Natural killer cell (primary cell): ENCODE measurements at regions of chr18 and their contacts with region 1.

Region 1: GRCh38 chr18:3062798-3063680 is 50.1 kb upstream of the LPIN2 start:
- DNase-seq: peak; percentile 37 to 82
- ATAC-seq: no peak
- H3K4me3 ChIP-seq: no peak overlapping the region
- H3K4me3 Mint-ChIP-seq: peak overlapping the region; percentile 60
- H3K27ac ChIP-seq: peak overlapping the region; percentile 90
- H3K27ac Mint-ChIP-seq: peak overlapping the region; percentile 87 to 99
- H3K4me1 ChIP-seq: peaks cover 70% of the 10 kb centered on the region
- H3K4me1 Mint-ChIP-seq: peaks cover 68 to 75% of the 10 kb centered on the region in 2 donors
- H3K27me3 ChIP-seq: no peaks in the 10 kb centered on the region
- H3K27me3 Mint-ChIP-seq: no peaks in the 10 kb centered on the region
- CTCF ChIP-seq: peak; percentile 66

Region 2: GRCh38 chr18:2723207-2723606 is 339.8 kb before region 1 on chr18:
- intact Hi-C with region 1: no loop called
- DNase-seq: no peak
- ATAC-seq: no peak
- H3K4me3 ChIP-seq: no peak overlapping the region
- H3K4me3 Mint-ChIP-seq: no peak overlapping the region
- H3K27ac ChIP-seq: no peak overlapping the region
- H3K27ac Mint-ChIP-seq: peak overlapping the region; percentile 4 to 51
- H3K4me1 ChIP-seq: no peaks in the 10 kb centered on the region
- H3K4me1 Mint-ChIP-seq: peaks cover 10 to 28% of the 10 kb centered on the region in 2 donors
- H3K27me3 ChIP-seq: no peaks in the 10 kb centered on the region
- H3K27me3 Mint-ChIP-seq: no peaks in the 10 kb centered on the region
- CTCF ChIP-seq: no peak

Region 3: GRCh38 chr18:2932247-2933181 is 130.5 kb before region 1 on chr18:
- intact Hi-C with region 1: loop called (anchors 10 kb)
- DNase-seq: peak in 1 of 2 donors; percentile 86
- ATAC-seq: peak; percentile 68 to 79 (median 69)
- H3K4me3 ChIP-seq: no peak overlapping the region
- H3K4me3 Mint-ChIP-seq: no peak overlapping the region
- H3K27ac ChIP-seq: no peak overlapping the region
- H3K27ac Mint-ChIP-seq: peak overlapping the region; percentile 76 to 77
- H3K4me1 ChIP-seq: peaks cover 5% of the 10 kb centered on the region
- H3K4me1 Mint-ChIP-seq: peaks cover 17 to 19% of the 10 kb centered on the region in 2 donors
- H3K27me3 ChIP-seq: no peaks in the 10 kb centered on the region
- H3K27me3 Mint-ChIP-seq: no peaks in the 10 kb centered on the region
- CTCF ChIP-seq: peak; percentile 84

Region 4: GRCh38 chr18:2994603-2995432 is 68.2 kb before region 1 on chr18:
- intact Hi-C with region 1: loop called (anchors 2 kb)
- DNase-seq: peak; percentile 61 to 88
- ATAC-seq: peak; percentile 93 to 97 (median 96)
- H3K4me3 ChIP-seq: no peak overlapping the region
- H3K4me3 Mint-ChIP-seq: no peak overlapping the region
- H3K27ac ChIP-seq: no peak overlapping the region
- H3K27ac Mint-ChIP-seq: peak overlapping the region; percentile 35 to 63
- H3K4me1 ChIP-seq: peaks cover 28% of the 10 kb centered on the region
- H3K4me1 Mint-ChIP-seq: peaks cover 41 to 56% of the 10 kb centered on the region in 2 donors
- H3K27me3 ChIP-seq: no peaks in the 10 kb centered on the region
- H3K27me3 Mint-ChIP-seq: no peaks in the 10 kb centered on the region
- CTCF ChIP-seq: peak; percentile 74

Region 5: GRCh38 chr18:3012964-3013804 is 49.9 kb before region 1 on chr18 and contains the start of gene LPIN2:
- intact Hi-C with region 1: loop called (anchors 1 kb)
- DNase-seq: peak; percentile 92 to 97
- ATAC-seq: peak; percentile 87 to 94 (median 89)
- H3K4me3 ChIP-seq: peak within 1 kb of the TSS; percentile 45
- H3K4me3 Mint-ChIP-seq: peak within 1 kb of the TSS; percentile 95
- H3K27ac ChIP-seq: peak within 1 kb of the TSS; percentile 83
- H3K27ac Mint-ChIP-seq: peak within 1 kb of the TSS; percentile 88
- H3K4me1 ChIP-seq: peaks cover 38% of the 10 kb centered on the region
- H3K4me1 Mint-ChIP-seq: peaks cover 33 to 39% of the 10 kb centered on the region in 2 donors
- H3K27me3 ChIP-seq: no peaks in the 10 kb centered on the region
- H3K27me3 Mint-ChIP-seq: no peaks in the 10 kb centered on the region
- CTCF ChIP-seq: no peak
- total RNA-seq, gene LPIN2: 32.9 to 58.8 (median 57.1) TPM

Region 6: DNA sequence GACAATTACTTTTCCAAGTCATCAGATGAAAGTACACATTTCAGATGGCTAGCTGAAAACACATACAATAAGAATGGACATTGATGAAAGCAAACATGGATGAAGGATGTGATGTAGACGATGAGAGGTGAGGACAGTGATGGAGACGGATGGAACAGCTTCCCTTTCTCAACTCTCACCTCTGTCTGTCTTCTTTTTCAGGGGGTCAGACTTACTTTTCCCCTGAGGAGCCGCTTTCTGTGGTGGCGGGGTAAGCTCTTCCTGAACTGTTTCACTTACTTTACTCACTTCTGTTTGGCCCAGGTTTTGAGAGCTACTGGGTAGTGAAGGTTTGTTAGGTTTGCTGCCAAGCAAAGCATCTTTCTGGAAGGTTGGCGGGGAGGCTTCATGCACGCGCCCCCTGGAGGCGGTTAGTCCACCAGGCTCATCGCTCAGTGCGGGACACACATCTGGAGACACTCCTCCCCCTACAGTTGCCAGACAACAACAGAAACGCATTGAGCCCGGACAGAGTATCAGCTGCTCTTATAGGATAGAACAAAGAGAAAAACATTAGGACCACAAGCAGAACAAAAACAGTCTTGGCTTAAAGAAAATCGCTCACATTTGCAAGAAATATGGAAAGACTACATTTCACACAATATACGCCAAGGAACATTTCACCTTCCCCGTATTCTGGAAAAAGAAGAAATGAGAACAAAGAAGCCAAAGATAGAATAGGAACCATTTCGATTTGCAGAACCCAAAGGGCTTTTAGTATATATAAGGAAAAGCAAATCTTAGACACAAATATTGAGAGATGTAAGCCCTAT is 66.2 kb after region 1 on chr18:
- intact Hi-C with region 1: loop called (anchors 2 kb)
- DNase-seq: peak; percentile 72 to 90
- ATAC-seq: peak; percentile 92 to 99 (median 99)
- H3K4me3 ChIP-seq: no peak overlapping the region
- H3K4me3 Mint-ChIP-seq: no peak overlapping the region
- H3K27ac ChIP-seq: no peak overlapping the region
- H3K27ac Mint-ChIP-seq: no peak overlapping the region
- H3K4me1 ChIP-seq: no peaks in the 10 kb centered on the region
- H3K4me1 Mint-ChIP-seq: peaks cover 7 to 8% of the 10 kb centered on the region in 2 donors
- H3K27me3 ChIP-seq: no peaks in the 10 kb centered on the region
- H3K27me3 Mint-ChIP-seq: peaks cover 0 to 3% of the 10 kb centered on the region in 2 donors
- CTCF ChIP-seq: peak; percentile 75

Region 7: DNA sequence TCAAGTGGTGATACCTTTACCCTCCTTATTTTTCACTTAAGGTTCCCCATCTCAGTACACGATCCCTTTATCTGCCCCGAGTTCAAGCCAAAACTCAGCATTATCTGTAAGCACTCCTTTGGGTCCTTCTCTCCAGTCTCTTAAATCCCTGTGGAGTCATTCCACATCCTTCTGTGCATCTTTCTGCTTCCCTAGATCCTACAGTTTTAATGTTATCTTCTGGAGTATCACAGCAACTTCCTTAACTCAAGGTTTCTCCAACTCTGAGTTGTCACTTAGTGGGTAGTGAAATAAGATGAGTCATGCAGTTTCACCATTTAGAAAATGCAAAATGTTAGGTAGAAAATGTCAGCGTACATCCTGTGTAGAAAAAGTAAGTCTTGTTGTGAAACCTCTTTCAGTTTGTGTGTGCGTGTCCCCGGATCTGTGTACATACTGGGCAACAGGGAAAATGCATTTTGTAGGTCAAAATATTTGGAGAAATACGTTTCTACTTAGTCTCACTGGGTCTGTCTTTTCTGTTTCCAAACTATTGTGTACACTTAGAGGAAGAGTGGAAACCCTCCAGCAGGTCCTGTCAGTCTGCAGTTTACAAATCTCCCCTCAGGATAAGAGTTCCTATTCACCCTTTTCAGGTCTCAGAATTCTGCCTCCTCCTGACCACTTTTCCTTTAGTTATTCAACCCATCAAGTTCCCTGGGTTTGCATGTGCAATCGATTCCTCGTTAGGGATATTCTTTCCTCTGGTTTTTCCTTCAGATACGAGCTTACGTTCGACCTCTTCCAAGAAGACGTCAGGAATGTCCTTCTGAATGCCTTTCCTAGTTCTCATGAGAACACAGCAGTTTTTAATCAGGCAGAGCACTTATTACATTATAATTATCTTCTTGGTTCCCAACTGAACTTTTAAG is 541.7 kb after region 1 on chr18:
- intact Hi-C with region 1: loop called (anchors 5 kb)
- DNase-seq: peak in 1 of 2 donors; percentile 72
- ATAC-seq: peak; percentile 70 to 86 (median 75)
- H3K4me3 ChIP-seq: peak overlapping the region; percentile 31
- H3K4me3 Mint-ChIP-seq: no peak overlapping the region
- H3K27ac ChIP-seq: peak overlapping the region; percentile 89
- H3K27ac Mint-ChIP-seq: no peak overlapping the region
- H3K4me1 ChIP-seq: peaks cover 34% of the 10 kb centered on the region
- H3K4me1 Mint-ChIP-seq: no peaks in the 10 kb centered on the region
- H3K27me3 ChIP-seq: no peaks in the 10 kb centered on the region
- H3K27me3 Mint-ChIP-seq: no peaks in the 10 kb centered on the region
- CTCF ChIP-seq: no peak